ENCODE measurements at regions of chr3 and their contacts with region 1.

Region 1: DNA sequence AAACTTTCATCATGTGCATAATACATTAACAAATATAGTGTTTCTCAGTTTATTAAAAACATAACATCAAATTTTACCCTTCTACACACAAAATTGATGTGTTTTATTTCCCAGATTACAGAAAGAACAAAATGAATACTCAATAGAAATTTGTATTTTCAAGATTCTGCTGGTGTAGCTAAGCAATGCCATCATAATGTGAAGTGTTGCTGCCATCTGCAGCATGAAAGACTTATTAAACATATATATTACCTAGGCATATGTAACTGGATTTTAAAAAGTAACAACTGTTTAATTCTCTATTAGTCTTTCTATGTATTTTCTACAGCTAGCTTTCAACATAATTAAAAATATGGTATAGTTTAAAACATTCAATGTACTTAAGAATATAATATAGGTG is 27.5 kb downstream of the PLSCR5 start:
- H3K4me3 Mint-ChIP-seq: no peak overlapping the region
- H3K27ac Mint-ChIP-seq: no peak overlapping the region
- H3K4me1 Mint-ChIP-seq: peaks cover 8% of the 10 kb centered on the region
- H3K27me3 Mint-ChIP-seq: no peaks in the 10 kb centered on the region

Region 2: DNA sequence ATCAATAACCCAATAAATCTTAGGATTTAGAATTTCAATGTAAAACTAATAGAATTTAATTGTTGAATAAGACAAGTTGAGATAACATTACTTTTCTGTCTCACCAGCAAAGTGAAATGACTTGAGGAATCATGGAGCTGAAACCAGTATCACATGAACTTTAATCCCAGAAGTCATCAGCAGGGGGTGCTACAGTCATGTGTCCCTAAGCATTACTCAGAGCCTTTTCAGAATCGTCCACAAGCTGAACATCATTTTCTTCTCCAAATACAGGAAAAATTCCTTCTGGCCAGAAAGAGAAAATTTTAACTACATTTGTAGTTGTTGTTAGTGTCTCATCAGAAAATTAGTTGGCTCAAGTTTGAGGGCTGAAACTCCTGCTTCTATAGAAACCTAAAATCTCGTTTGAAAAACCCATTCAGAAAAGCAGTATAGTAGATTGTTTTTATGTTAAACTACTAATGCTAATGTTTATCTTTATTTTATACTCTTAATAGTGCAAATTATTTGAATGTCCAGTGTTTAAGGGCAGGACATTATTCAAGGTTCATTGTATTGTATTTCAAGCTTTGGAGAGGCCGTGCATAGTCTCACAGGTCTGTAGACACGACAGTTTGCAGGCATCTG is 800.8 kb before region 1 on chr3:
- intact Hi-C with region 1: no loop called
- H3K4me3 Mint-ChIP-seq: no peak overlapping the region
- H3K27ac Mint-ChIP-seq: no peak overlapping the region
- H3K4me1 Mint-ChIP-seq: no peaks in the 10 kb centered on the region
- H3K27me3 Mint-ChIP-seq: no peaks in the 10 kb centered on the region

Region 3: GRCh38 chr3:146189519-146190173 is 388.0 kb before region 1 on chr3:
- intact Hi-C with region 1: loop called (anchors 1 kb)
- H3K4me3 Mint-ChIP-seq: no peak overlapping the region
- H3K27ac Mint-ChIP-seq: no peak overlapping the region
- H3K4me1 Mint-ChIP-seq: peaks cover 5% of the 10 kb centered on the region
- H3K27me3 Mint-ChIP-seq: no peaks in the 10 kb centered on the region

Region 4: DNA sequence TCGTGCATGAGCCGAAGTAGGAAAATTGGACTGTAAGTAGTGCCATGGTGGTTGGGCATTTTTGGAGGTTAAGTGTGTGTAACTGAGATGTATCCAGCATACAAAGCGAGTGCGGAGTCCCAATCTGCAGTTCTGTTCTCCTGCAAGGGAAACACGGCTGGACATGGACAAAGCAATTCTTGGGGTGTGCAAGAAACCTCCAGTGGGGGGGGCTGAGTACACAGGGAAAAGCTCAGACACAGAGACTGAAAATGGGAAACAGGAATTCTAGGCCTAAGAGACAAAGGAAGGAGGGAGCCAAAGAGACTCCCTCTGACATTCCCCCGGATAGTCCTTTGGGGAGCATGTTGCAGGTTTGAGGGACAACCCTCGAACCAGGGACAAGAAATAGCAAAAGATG is 243.5 kb before region 1 on chr3:
- intact Hi-C with region 1: loop called (anchors 5 kb)
- H3K4me3 Mint-ChIP-seq: no peak overlapping the region
- H3K27ac Mint-ChIP-seq: no peak overlapping the region
- H3K4me1 Mint-ChIP-seq: no peaks in the 10 kb centered on the region
- H3K27me3 Mint-ChIP-seq: no peaks in the 10 kb centered on the region

Measured in dendritic cell treated with granulocyte-macrophage colony-stimulating factor and Interleukin-4, amounts not matched to agents 40 ng/mL and 50 ng/mL, for 4 days (primary cell).